Activated naive CD4-positive, alpha-beta T cell treated with anti-CD3 and anti-CD28 coated beads for 36 hours (primary cell): ENCODE measurements at regions of chr3 and their contacts with region 1.

Region 1: GRCh38 chr3:142828703-142829305 is 60.1 kb downstream of the PCOLCE2 start:
- DNase-seq: peak; percentile 87
- H3K4me3 Mint-ChIP-seq: no peak overlapping the region
- H3K27ac Mint-ChIP-seq: no peak overlapping the region
- H3K4me1 Mint-ChIP-seq: no peaks in the 10 kb centered on the region
- H3K27me3 Mint-ChIP-seq: peaks cover 3% of the 10 kb centered on the region

Region 2: GRCh38 chr3:142586803-142587406 is 241.9 kb before region 1 on chr3:
- CTCF ChIA-PET with region 1: interaction called, 7 read pairs
- intact Hi-C with region 1: loop called (anchors 1 kb)
- DNase-seq: peak; percentile 40
- H3K4me3 Mint-ChIP-seq: no peak overlapping the region
- H3K27ac Mint-ChIP-seq: no peak overlapping the region
- H3K4me1 Mint-ChIP-seq: no peaks in the 10 kb centered on the region
- H3K27me3 Mint-ChIP-seq: peaks cover 5% of the 10 kb centered on the region

Region 3: DNA sequence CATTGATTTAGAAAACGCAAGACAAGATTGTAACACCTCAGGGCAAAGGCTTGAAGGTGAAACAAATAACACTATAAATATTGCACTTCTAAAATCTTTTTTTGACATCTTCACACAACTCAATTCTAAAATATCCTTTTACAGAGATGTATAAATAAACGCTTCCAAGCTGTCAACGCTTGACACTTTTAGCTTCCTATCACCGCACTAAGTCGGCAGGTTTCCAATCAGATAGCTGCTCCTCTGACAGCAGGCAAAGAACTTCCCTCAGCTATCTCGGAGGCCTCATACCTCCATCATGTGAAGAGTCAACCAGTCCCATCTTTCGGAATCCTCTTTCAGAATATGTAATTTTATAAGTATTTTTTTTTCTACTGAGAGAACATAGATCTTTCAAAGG is 10.9 kb before region 1 on chr3:
- CTCF ChIA-PET with region 1: interaction called, 15 read pairs
- intact Hi-C with region 1: no loop called
- DNase-seq: no peak
- H3K4me3 Mint-ChIP-seq: no peak overlapping the region
- H3K27ac Mint-ChIP-seq: no peak overlapping the region
- H3K4me1 Mint-ChIP-seq: no peaks in the 10 kb centered on the region
- H3K27me3 Mint-ChIP-seq: no peaks in the 10 kb centered on the region

Region 4: DNA sequence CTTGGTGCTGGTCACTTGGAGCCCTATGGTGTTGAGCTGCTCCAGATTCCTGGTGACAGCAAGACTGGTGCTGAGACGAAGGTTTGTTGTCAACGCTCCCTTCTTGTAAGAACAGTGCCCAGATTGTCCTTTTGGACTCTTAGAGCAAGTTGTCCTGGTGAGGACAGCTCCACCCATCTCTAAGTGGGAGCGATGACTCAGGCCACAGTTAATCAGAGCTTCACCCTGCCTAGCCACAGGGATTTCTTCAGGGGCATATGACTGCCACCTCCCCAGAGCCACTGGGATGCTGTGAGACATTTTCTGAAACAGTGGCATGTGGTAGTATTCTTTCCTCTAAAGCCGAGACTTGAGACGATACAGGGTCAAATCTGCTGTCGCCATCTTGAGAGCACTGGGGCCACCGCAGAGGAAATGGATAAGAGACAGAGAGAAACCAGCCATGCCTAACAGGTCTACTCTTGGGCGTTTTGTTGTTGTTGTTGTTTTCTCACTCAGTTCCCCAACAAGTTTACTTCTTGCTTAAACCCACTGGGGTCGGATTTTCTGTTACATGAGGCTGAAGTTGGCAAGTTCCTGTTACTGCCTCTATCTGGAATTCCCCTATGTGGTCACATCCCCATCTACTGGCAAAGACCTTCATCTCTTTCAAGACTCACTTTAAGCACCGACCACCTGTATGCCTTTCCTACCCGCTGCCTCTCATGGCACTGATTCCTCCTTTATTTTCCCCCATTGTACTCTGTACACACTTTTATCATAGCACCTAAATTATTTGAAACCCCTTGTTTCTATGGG is 76.0 kb after region 1 on chr3:
- CTCF ChIA-PET with region 1: interaction called, 8 read pairs
- intact Hi-C with region 1: loop called (anchors 1 kb)
- DNase-seq: peak; percentile 16
- H3K4me3 Mint-ChIP-seq: no peak overlapping the region
- H3K27ac Mint-ChIP-seq: no peak overlapping the region
- H3K4me1 Mint-ChIP-seq: peaks cover 8% of the 10 kb centered on the region
- H3K27me3 Mint-ChIP-seq: peaks cover 16% of the 10 kb centered on the region

Region 5: DNA sequence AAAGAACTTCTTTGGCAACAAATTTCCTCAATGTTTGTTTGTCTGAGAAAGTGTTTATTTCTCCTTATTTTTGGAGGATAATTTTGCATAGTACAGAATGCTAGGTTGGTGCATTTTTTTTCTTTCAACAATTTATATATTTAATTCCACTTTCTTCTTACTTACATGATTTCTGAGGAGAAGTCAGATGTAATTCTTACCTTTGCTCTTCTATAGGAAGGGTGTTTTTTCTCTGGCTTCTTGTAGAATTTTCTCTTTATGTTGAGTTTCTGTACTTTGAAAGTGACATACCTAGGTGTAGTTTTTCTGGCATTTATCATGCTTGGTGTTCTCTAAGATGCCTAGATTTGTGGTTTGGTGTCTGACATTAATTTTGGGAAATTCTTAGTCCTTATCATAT is 94.9 kb after region 1 on chr3:
- CTCF ChIA-PET with region 1: no interaction called
- intact Hi-C with region 1: no loop called
- DNase-seq: no peak
- H3K4me3 Mint-ChIP-seq: no peak overlapping the region
- H3K27ac Mint-ChIP-seq: no peak overlapping the region
- H3K4me1 Mint-ChIP-seq: no peaks in the 10 kb centered on the region
- H3K27me3 Mint-ChIP-seq: peaks cover 15% of the 10 kb centered on the region

Region 6: GRCh38 chr3:142987080-142987700 is 158.4 kb after region 1 on chr3:
- CTCF ChIA-PET with region 1: interaction called, 24 read pairs
- intact Hi-C with region 1: loop called (anchors 1 kb)
- DNase-seq: no peak
- H3K4me3 Mint-ChIP-seq: no peak overlapping the region
- H3K27ac Mint-ChIP-seq: no peak overlapping the region
- H3K4me1 Mint-ChIP-seq: no peaks in the 10 kb centered on the region
- H3K27me3 Mint-ChIP-seq: no peaks in the 10 kb centered on the region

Region 7: DNA sequence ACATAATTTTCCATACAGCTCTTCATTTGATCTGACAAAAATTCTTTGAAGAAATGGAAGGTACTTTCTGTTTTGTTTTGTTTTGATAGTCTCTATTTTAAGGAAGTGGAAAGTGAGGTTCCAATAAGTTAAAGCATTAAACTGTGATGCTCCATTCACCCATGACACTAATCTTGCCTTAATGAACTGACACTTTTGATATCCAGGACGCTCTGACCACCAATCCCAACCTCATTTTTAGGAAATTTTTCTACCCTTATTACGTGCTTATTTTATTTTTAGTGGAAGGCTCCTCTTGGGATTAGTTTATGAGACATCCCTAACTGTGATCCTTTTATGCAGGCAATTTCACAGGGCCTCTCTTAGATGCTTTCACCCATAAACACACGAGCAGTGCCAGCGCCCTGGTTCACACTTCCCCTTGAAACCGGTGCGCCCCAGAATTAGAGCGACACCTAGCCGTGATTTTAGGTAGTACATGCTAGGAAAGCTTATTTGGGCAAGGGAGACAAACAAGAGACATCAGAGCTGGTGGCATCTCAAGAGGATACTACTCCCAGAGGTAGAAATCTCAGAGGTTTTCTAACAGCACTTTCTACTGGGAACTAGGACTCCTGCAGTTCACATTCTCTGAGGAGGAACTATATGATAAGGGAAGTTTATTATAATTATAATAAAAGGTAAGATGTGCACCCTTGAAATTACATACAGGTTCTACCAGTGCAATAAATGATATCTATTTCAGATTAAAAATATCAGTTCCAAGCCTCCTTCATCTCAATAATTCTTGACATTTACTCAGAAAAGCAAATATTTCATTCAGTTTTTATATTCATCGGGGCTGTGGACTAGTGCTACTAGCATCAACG is 845.5 kb after region 1 on chr3:
- CTCF ChIA-PET with region 1: no interaction called
- intact Hi-C with region 1: loop called (anchors 5 kb)
- DNase-seq: peak; percentile 89
- H3K4me3 Mint-ChIP-seq: peak overlapping the region; percentile 46
- H3K27ac Mint-ChIP-seq: no peak overlapping the region
- H3K4me1 Mint-ChIP-seq: peaks cover 10% of the 10 kb centered on the region
- H3K27me3 Mint-ChIP-seq: no peaks in the 10 kb centered on the region